Sigmoid colon (tissue), 7 donors: ENCODE measurements at regions of chr1 and their contacts with region 1.

Region 1: DNA sequence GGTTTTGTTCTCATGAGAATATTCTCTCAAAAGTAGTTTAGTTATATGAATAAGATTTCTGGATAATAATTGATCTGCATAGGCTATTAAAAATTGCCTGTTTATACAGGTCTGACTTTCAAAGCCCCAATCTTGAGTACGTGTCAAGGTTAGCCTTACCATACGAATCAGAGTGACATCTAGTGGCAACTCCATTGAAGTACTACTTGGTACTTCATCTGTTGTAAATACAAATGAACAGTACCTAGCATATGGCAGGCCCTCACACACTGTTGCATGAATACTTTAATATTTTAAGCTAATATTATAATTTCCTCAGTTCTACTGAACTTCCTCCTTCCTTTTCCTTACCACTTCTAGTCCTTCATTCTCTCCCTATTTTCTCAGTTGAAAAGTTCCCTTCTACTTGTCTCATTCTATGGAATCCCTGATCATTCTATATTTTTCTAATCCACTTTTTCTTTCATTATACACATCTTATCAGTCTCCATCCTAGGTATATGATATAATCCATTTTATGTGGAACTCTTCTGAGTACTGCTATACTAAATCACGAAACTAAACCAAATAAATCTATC is 101.2 kb downstream of the AKT3 start:
- DNase-seq: no peak
- H3K4me3 ChIP-seq: no peak overlapping the region
- H3K27ac ChIP-seq: no peak overlapping the region
- H3K4me1 ChIP-seq: peaks cover 0 to 37% (median 7%) of the 10 kb centered on the region in 4 donors
- H3K27me3 ChIP-seq: no peaks in the 10 kb centered on the region
- CTCF ChIP-seq: peak; percentile 55 to 77 (median 64)
- EP300 ChIP-seq: no peak
- POLR2A ChIP-seq: no peak

Region 2: DNA sequence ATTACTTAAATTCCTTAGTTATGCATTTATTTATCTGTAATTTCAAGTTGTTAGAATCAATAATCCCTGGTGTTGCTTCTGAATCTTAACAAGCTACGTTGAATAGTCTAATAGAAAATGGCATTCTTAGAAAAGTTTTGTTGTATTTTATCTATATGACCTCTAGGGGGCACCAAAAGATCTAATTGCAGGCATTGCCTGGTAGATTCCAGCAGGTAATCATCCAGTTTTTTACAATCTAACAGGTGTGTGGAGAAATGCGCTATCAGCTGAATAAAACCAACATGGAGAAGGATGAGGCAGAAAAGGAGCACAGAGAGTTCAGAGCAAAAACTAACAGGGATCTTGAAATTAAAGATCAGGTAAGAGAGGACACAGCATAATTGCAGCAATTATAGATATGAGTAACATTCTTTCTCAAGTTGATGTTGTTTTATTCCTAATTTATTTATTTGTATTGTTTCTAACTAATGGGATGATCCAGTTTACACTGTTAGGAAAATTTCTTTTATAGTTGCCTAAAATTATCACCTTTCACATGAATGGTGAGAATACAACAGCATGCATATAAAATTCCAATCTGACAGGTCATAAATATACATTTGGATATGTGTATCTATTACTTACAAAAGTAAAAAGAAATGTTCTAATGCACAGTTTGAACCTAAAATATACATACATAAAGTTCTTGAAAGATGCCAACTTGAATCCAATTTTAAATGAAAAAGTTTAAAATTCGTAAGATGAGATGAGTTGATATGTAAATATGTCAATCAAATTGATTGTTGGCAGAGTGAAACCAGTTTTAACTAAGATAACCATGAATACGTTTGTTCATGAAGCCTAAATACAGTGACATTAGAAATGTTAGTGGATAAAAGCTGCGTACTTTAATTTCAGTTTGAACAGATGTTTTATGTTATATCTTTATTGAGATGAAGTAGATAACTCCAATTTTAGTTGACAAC is 404.5 kb before region 1 on chr1:
- intact Hi-C with region 1: loop called (anchors 2 kb)
- DNase-seq: no peak
- H3K4me3 ChIP-seq: no peak overlapping the region
- H3K27ac ChIP-seq: no peak overlapping the region
- H3K4me1 ChIP-seq: peaks cover 0 to 4% (median 0%) of the 10 kb centered on the region in 4 donors
- H3K27me3 ChIP-seq: no peaks in the 10 kb centered on the region
- CTCF ChIP-seq: peak; percentile 24 to 73 (median 64)
- EP300 ChIP-seq: no peak
- POLR2A ChIP-seq: no peak

Region 3: DNA sequence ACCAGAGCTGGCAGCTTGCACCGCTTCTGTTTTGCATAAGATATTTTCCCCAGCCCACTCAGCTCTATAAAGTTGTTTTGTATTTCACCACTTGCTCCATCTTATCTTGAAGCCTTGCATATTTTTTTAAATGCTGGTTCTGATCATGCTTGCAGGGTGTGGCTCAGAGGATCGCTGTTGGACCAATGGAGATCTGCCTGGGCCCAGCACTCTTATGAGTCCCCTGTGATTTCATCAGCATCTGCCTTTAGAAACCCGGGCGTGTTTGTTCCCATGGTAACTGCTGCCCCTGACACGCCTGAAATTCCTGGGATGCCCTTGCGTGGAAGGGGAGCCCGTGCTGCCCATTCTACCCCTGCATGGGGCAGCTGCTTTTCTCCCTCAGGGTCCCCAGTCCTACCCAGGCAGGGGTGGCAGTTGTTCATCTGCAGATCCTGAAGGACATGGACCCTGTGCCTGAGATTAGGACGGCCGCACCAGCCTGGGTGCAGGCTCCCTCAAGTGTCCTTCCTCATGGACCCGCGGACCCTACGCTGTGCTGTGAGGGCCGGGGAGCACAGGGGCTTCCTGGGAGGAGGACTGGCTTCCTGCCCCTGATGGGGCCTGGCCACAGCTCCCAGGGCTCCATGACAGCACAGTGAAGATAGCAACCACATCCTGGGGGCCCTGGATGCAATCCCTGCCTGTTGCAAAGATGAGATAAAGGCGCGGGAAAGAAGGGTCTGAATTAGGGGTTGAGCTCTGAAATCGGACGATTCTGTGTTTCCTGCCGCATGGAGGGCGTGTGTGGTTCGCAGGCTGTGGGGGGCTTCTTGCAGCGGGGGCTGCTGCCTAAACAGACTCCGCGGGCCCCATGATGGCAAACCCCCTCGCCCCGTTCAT is 266.4 kb before region 1 on chr1:
- intact Hi-C with region 1: loop called (anchors 5 kb)
- DNase-seq: peak; percentile 67
- H3K4me3 ChIP-seq: peak overlapping the region; percentile 34 to 63 (median 54)
- H3K27ac ChIP-seq: peak overlapping the region in 2 of 4 donors; percentile 24 to 39
- H3K4me1 ChIP-seq: peaks cover 0 to 17% (median 11%) of the 10 kb centered on the region in 4 donors
- H3K27me3 ChIP-seq: no peaks in the 10 kb centered on the region
- CTCF ChIP-seq: no peak
- EP300 ChIP-seq: no peak
- POLR2A ChIP-seq: no peak

Region 4: GRCh38 chr1:243526180-243526579 is 222.6 kb before region 1 on chr1:
- intact Hi-C with region 1: no loop called
- DNase-seq: no peak
- H3K4me3 ChIP-seq: no peak overlapping the region
- H3K27ac ChIP-seq: no peak overlapping the region
- H3K4me1 ChIP-seq: peaks cover 0 to 15% (median 12%) of the 10 kb centered on the region in 4 donors
- H3K27me3 ChIP-seq: no peaks in the 10 kb centered on the region
- CTCF ChIP-seq: no peak
- EP300 ChIP-seq: no peak
- POLR2A ChIP-seq: no peak